Mammary epithelial cell (primary cell): ENCODE measurements at regions of chr21 and their contacts with region 1.

Region 1: GRCh38 chr21:46545347-46545746 is 59.5 kb downstream of the S100B start:
- DNase-seq: peak; percentile 96
- H3K4me3 ChIP-seq: no peak overlapping the region
- H3K27ac ChIP-seq: peak overlapping the region; percentile 77
- H3K4me1 ChIP-seq: peaks cover 26% of the 10 kb centered on the region
- H3K27me3 ChIP-seq: no peaks in the 10 kb centered on the region
- CTCF ChIP-seq: no peak

Region 2: DNA sequence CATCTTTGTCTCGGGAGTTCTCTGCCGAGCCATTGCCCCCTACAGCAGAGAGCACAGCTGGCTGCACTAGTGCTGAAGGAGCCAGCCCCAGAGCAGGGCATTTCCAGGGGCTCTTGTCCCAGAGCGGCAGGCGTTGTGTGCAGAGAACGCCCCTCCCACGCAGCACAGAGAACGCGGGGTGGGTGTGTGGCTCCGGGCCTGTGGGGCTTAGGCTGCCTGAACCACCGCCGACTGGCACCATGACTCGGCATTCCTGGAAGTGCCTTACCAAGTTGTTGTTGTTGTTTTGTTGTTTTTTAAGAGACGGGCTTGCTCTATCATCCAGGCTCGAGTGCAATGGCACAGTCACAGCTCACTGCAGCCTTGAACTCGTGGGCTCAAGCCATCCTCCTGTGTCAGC is 102.4 kb before region 1 on chr21:
- CTCF ChIA-PET with region 1: no interaction called
- dilution Hi-C with region 1: no loop called
- in situ Hi-C with region 1: no loop called
- intact Hi-C with region 1: no loop called
- DNase-seq: no peak
- H3K4me3 ChIP-seq: no peak overlapping the region
- H3K27ac ChIP-seq: no peak overlapping the region
- H3K4me1 ChIP-seq: no peaks in the 10 kb centered on the region
- H3K27me3 ChIP-seq: no peaks in the 10 kb centered on the region
- CTCF ChIP-seq: no peak

Region 3: DNA sequence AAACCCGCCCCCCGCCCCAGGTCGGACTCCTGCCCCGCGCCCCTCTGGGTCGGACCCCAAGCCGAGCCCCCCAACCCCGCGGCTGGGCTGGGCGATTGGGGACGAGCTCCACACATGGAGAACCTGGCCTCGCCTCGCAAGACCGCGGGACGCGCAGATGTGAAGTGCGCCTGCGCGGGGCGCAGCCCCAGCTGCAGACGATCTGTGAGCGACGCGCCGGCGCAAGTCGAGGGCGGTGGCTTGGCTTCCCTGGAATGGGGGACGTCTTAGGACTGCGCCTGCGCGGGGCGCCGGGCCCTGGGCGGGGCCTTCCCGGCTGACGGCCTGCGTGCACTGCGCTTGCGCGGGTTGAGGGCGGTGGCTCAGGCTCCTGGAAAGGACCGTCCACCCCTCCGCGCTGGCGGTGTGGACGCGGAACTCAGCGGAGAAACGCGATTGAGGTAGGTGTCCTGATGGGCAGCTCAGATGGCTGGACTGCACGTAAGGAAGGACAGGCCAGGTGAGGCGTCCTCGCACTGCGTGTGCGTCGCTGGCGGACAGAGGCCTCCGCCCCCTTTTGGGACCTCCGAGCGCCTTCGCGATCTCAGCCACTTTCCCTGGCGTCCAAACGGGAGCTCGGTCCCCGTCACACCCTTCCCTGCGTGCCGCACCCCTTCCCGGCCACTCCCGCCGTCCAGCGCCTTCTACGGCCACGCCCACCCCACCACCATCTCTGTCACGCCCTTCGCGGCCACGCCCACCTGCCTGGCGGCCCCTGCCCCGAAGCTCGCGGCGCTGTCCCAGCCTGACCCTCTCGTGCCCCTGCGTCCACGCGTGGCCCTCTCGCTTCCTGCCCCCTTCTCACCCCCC is 90.2 kb after region 1 on chr21 and contains the start of gene PRMT2:
- CTCF ChIA-PET with region 1: no interaction called
- dilution Hi-C with region 1: no loop called
- in situ Hi-C with region 1: no loop called
- intact Hi-C with region 1: loop called (anchors 1 kb)
- DNase-seq: peak; percentile 95
- H3K4me3 ChIP-seq: peak within 1 kb of the TSS; percentile 68 to 100 (median 90)
- H3K27ac ChIP-seq: peak within 1 kb of the TSS; percentile 94
- H3K4me1 ChIP-seq: peaks cover 23% of the 10 kb centered on the region
- H3K27me3 ChIP-seq: no peaks in the 10 kb centered on the region
- CTCF ChIP-seq: no peak
- total RNA-seq, gene PRMT2: 83.8 to 108 TPM